ENCODE measurements at regions of chr1 and their contacts with region 1.

Region 1: DNA sequence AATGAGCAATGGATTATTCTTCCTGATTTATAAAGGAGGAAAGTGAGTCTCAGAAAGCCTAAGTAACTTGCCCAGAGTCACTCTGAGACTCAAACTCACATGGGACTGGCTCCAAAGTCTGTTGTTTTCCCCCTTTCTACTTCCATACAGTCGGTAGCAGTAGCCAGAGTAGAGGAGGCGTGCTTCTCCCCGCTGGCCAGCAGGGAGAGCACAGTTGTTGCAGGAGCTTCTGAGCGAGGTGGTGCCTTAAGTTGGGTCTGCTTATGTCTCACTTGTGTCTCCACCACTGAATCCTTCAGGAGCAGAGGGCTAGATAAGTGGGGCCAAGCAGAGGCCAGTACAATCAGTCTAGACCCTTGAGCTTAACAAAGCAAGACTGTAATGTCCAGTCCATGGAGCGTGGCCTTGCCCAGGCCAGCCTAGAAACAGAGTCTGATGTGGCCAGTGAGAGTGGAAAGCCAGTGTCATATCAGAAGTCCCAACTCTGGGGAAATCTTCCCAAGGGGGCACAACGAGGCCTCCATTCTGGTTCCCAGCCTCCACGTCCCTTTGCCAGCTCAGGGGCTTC is 181.9 kb downstream of the ZSCAN20 start:
- DNase-seq: no peak
- H3K4me3 ChIP-seq: no peak overlapping the region
- H3K27me3 ChIP-seq: no peaks in the 10 kb centered on the region
- CTCF ChIP-seq: peak; percentile 69

Region 2: DNA sequence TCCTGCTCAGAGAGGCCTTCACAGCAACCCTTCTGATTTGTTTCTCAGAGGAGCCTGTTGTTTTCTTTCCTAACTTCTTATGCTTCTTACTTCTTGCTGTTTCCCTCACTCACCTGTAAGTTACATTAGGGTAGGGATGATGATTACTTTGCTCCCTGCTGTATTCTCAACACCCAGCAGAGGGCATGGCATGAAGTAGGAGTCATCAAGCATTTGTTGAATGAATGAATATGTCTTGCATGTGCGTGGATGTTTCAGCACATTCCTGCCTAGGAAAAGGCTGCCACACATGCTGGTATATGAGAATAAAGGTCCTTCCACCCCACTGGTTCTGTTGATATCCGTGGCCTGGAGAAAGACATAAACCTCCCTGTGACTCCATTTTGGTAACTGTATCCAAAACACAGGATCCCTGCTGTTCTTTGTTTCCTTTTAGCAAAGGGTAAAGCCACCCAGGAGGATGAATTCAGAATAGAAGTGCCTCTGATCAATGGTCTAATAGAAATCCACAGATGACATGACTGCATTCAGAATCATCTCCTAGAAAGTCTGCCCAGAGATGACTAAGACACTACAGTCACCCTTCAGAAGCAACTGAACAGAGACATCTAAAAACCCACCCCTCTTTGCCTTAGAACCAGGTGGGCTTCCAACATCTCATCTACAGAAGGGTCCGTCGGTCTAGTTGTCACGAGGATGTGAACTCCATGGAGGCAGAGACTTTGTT is 13.1 kb before region 1 on chr1:
- CTCF ChIA-PET with region 1: interaction called, 15 read pairs
- POLR2A ChIA-PET with region 1: no interaction called
- DNase-seq: no peak
- H3K4me3 ChIP-seq: no peak overlapping the region
- H3K27me3 ChIP-seq: no peaks in the 10 kb centered on the region
- CTCF ChIP-seq: peak; percentile 45